ENCODE measurements at regions of chr12 and their contacts with region 1.

Region 1: DNA sequence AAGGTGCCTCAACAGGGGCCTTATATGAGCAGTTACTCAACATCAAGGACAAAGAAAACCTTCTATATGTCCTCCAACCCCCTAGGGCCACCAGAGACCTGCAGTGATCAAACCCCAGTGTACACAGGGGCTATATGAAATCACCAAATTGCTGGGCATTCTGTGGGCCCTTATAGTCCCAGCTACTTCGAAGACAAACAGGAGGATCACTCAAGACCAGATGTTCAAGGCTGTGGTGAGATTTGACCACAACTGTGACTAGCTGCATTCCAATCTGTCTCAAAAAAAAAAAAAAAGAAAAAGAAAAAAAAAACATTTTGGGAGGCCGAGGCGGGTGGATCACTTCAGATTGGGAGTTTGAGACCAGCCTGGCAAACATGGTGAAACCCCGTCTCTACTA is 51.0 kb upstream of the PRB2 start:
- DNase-seq: no peak
- H3K4me3 ChIP-seq: no peak overlapping the region
- H3K27ac ChIP-seq: no peak overlapping the region
- H3K4me1 ChIP-seq: no peaks in the 10 kb centered on the region
- H3K27me3 ChIP-seq: no peaks in the 10 kb centered on the region
- CTCF ChIP-seq: no peak
- EP300 ChIP-seq: no peak
- POLR2A ChIP-seq: no peak

Region 2: GRCh38 chr12:11347810-11348209 is 98.6 kb before region 1 on chr12:
- in situ Hi-C with region 1: loop called in 1 of 4 experiments (anchors 25 kb)
- intact Hi-C with region 1: no loop called
- DNase-seq: no peak
- H3K4me3 ChIP-seq: no peak overlapping the region
- H3K27ac ChIP-seq: no peak overlapping the region
- H3K4me1 ChIP-seq: no peaks in the 10 kb centered on the region
- H3K27me3 ChIP-seq: no peaks in the 10 kb centered on the region
- CTCF ChIP-seq: peak in 1 of 5 experiments; percentile 24
- EP300 ChIP-seq: no peak
- POLR2A ChIP-seq: no peak

Region 3: GRCh38 chr12:11684393-11684792 is 238.0 kb after region 1 on chr12:
- in situ Hi-C with region 1: no loop called
- intact Hi-C with region 1: no loop called
- DNase-seq: no peak
- H3K4me3 ChIP-seq: no peak overlapping the region
- H3K27ac ChIP-seq: peak overlapping the region in 3 of 4 donors; percentile 13 to 51 (median 30)
- H3K4me1 ChIP-seq: peaks cover 31 to 83% (median 63%) of the 10 kb centered on the region in 4 donors
- H3K27me3 ChIP-seq: no peaks in the 10 kb centered on the region
- CTCF ChIP-seq: no peak
- EP300 ChIP-seq: no peak
- POLR2A ChIP-seq: no peak

Measured in transverse colon (tissue), 4 donors.